PC-3 (cell line): ENCODE measurements at regions of chr7 and their contacts with region 1.

Region 1: GRCh38 chr7:12686894-12687717 is at the start of gene ARL4A:
- DNase-seq: peak; percentile 98
- ATAC-seq: peak; percentile 76
- H3K4me3 ChIP-seq: peak within 1 kb of the TSS; percentile 92
- H3K27ac ChIP-seq: peak within 1 kb of the TSS; percentile 71
- H3K4me1 ChIP-seq: peaks cover 32% of the 10 kb centered on the region
- H3K27me3 ChIP-seq: no peaks in the 10 kb centered on the region
- CTCF ChIP-seq: peak; percentile 61
- total RNA-seq, gene ARL4A: 23.7 and 25.1 TPM in 2 replicates

Region 2: GRCh38 chr7:12222889-12223579 is 464.1 kb before region 1 on chr7:
- CTCF ChIA-PET with region 1: no interaction called
- POLR2A ChIA-PET with region 1: no interaction called
- intact Hi-C with region 1: no loop called
- DNase-seq: no peak
- ATAC-seq: no peak
- H3K4me3 ChIP-seq: no peak overlapping the region
- H3K27ac ChIP-seq: no peak overlapping the region
- H3K4me1 ChIP-seq: peaks cover 3% of the 10 kb centered on the region; the same call in 1 of the 2 replicates
- H3K27me3 ChIP-seq: no peaks in the 10 kb centered on the region
- CTCF ChIP-seq: no peak

Region 3: DNA sequence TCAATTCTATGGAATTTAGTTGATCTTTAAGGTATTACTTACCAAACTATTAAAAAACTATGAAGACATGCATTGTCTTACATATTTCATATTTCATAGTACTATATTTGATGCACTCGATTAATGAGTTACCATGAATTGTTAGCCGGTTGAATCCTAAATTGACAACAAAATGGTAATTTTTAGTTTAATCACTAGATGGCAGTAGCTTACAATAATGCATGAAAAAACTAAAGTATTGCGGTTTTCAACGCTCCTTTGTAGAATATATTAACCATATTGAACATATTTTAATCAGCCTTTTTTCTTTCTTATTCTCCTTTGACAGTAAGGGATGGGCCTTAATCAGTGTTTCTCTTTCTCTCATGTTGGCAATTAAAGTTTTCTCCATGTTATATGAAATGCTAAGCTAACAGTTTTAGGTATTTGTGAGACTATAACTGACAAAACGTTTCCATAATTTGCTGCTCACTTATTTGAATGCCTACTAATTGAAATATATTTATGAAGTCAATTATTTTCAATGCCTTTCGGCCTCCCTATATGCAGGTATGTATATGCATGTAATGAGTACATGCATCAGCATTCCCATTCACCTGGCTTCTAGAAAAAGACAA is 48.1 kb before region 1 on chr7:
- CTCF ChIA-PET with region 1: interaction called, 3 read pairs
- POLR2A ChIA-PET with region 1: interaction called, 3 read pairs
- intact Hi-C with region 1: loop called (anchors 1 kb)
- DNase-seq: peak; percentile 86
- ATAC-seq: peak; percentile 64
- H3K4me3 ChIP-seq: no peak overlapping the region
- H3K27ac ChIP-seq: no peak overlapping the region
- H3K4me1 ChIP-seq: peaks cover 4% of the 10 kb centered on the region; the same call in 1 of the 2 replicates
- H3K27me3 ChIP-seq: no peaks in the 10 kb centered on the region
- CTCF ChIP-seq: peak; percentile 74

Region 4: DNA sequence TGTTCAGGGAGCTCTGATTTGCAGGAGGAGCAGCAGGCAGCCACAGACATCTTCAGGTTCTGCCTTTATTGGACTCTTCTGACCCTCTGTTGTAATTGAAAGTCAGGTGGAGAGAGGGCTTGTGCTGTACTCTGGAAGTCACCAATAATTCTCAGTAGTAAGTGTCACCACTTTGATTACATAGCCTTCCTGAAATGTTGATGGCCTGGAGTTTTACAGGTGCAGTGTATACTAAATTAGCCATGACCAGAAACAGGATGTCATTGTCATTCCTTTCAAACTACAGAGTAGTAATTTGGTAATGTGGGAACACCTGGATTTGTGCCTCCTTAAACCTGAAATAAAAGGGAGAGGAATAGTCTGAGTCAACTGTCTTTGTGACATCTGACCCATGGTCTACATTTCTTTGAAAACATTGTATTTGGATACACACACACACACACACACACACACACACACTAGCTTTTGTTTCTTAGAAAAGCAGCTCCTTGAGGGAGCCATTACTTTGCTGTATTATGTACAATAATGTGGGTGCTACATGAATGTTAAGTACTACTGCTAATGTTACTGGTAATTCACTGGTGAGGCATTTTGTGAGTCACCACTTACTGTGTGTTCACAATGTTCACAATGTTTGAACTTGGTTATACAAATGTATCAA is 19.9 kb after region 1 on chr7:
- CTCF ChIA-PET with region 1: interaction called, 15 read pairs
- POLR2A ChIA-PET with region 1: interaction called, 3 read pairs
- intact Hi-C with region 1: loop called (anchors 1 kb)
- DNase-seq: peak; percentile 91
- ATAC-seq: peak; percentile 84
- H3K4me3 ChIP-seq: peak overlapping the region; percentile 26; the same call in 1 of the 2 replicates
- H3K27ac ChIP-seq: peak overlapping the region; percentile 85
- H3K4me1 ChIP-seq: peaks cover 57% of the 10 kb centered on the region
- H3K27me3 ChIP-seq: no peaks in the 10 kb centered on the region
- CTCF ChIP-seq: no peak

Region 5: DNA sequence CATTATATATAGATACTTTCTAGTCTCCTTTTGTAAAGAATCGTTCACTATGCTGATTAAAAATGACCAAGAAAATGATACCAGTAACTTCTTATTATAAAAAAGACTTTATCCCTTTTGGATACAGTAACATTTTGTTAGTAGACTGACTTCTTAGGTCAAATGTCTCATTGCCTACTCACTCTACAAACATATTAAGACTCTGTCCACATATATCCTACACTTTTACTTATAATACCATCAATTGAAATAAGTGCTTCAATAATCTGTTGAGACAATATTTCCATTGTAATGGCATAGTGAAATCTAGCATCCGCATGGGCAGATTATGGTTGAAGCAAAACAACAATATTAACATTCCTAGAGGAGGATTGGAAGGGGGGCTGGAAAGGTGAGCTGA is 180.9 kb after region 1 on chr7:
- CTCF ChIA-PET with region 1: no interaction called
- POLR2A ChIA-PET with region 1: no interaction called
- intact Hi-C with region 1: loop called (anchors 1 kb)
- DNase-seq: peak; percentile 51
- ATAC-seq: peak; percentile 96
- H3K4me3 ChIP-seq: no peak overlapping the region
- H3K27ac ChIP-seq: no peak overlapping the region
- H3K4me1 ChIP-seq: peaks cover 13% of the 10 kb centered on the region
- H3K27me3 ChIP-seq: no peaks in the 10 kb centered on the region
- CTCF ChIP-seq: no peak

Region 6: GRCh38 chr7:13042612-13043240 is 355.6 kb after region 1 on chr7:
- CTCF ChIA-PET with region 1: interaction called, 5 read pairs
- POLR2A ChIA-PET with region 1: no interaction called
- intact Hi-C with region 1: loop called (anchors 2 kb)
- DNase-seq: peak; percentile 87
- ATAC-seq: peak; percentile 99
- H3K4me3 ChIP-seq: no peak overlapping the region
- H3K27ac ChIP-seq: peak overlapping the region; percentile 68
- H3K4me1 ChIP-seq: peaks cover 26% of the 10 kb centered on the region
- H3K27me3 ChIP-seq: no peaks in the 10 kb centered on the region
- CTCF ChIP-seq: no peak

Region 7: DNA sequence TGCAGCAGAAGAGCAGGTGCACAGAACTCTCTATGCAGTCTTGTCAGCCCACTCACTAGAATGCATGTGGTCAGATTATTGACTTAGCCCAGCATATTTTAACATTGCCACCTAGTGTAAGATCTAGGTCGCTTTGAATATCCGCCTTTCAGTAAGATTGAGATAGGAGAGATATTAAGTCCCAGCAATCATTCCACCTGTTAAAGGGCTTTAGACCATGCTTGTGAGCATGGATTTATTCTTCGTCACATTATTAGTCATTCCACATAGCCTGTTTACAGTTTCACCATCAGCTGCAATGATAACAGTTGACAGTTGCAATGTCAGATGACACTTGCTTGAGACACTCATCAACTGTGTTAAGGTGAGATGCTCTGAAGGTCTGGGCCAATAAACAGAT is 492.0 kb after region 1 on chr7:
- CTCF ChIA-PET with region 1: no interaction called
- POLR2A ChIA-PET with region 1: no interaction called
- intact Hi-C with region 1: loop called (anchors 1 kb)
- DNase-seq: peak; percentile 30
- ATAC-seq: peak; percentile 60
- H3K4me3 ChIP-seq: no peak overlapping the region
- H3K27ac ChIP-seq: no peak overlapping the region
- H3K4me1 ChIP-seq: peaks cover 18% of the 10 kb centered on the region
- H3K27me3 ChIP-seq: no peaks in the 10 kb centered on the region
- CTCF ChIP-seq: peak; percentile 48; the same call in 1 of the 2 replicates